Right ventricle myocardium inferior (tissue), 1 donor: ENCODE measurements at regions of chr3 and their contacts with region 1.

Region 1: DNA sequence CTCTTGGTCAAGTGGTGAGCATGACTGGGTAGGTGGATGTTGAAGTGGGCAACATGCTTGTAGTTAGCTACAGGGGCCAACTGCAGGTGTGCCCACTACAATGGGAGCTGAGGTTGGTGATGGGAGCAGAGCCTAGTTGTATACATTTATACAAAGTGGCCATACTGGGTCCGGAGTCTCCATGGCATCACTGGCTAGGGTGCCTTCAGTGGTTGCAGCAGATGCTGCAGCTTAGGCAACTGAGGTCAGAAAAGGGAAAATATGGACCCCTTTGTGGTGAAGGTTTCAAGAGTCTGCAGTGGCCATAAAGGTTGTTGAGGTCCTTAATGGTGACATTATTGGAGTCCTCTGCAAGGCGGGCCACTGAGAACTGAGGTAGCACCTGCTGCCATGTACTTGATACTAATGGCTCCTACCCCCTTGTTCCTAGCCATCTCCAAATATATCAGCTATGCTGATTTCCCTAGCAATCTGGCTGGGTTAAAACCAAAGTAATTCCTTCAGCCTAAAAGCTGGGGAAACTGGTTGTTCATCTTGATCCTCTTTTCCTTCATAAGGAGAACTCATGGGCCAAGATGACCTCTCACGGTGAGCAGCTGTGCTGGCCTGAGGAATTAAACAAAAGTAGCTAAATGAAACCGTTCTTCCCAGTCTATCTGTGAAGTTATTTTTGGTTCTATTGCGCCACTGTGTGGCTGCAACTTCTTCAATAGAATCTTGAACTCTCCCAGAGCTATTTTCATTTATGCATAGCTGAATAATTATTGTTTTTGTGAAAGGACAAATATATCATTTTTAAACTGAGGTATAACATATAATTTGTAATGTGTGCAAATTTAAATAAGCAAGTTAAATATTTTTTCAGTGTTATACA is 76.0 kb upstream of the PLSCR4 start:
- DNase-seq: no peak
- ATAC-seq: peak; percentile 81

Region 2: DNA sequence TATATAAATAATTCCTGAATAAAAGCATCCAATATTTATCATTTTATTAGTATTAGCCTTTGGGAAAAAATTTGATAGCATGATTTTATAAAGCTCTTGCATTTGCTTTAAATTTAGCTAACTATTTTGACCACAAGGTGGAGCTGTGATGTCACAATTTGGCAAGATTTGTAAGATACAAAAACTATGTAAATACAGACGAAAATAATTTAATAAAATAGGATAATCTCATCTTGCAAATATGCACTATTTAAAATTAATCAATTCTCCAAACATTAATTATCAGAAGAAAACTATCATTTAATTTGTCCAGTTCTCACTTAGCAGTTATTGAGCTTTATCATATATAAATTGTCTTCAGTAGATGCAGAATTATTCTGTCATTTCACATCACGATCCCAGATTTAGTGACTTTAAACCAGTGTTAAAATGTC is 261.3 kb before region 1 on chr3:
- intact Hi-C with region 1: loop called (anchors 5 kb)
- DNase-seq: no peak
- ATAC-seq: no peak

Region 3: GRCh38 chr3:146189519-146190173 is 137.3 kb before region 1 on chr3:
- intact Hi-C with region 1: loop called (anchors 1 kb)
- DNase-seq: no peak
- ATAC-seq: peak; percentile 59

Region 4: GRCh38 chr3:146200461-146201220 is 126.3 kb before region 1 on chr3:
- intact Hi-C with region 1: loop called (anchors 5 kb)
- DNase-seq: no peak
- ATAC-seq: no peak

Region 5: DNA sequence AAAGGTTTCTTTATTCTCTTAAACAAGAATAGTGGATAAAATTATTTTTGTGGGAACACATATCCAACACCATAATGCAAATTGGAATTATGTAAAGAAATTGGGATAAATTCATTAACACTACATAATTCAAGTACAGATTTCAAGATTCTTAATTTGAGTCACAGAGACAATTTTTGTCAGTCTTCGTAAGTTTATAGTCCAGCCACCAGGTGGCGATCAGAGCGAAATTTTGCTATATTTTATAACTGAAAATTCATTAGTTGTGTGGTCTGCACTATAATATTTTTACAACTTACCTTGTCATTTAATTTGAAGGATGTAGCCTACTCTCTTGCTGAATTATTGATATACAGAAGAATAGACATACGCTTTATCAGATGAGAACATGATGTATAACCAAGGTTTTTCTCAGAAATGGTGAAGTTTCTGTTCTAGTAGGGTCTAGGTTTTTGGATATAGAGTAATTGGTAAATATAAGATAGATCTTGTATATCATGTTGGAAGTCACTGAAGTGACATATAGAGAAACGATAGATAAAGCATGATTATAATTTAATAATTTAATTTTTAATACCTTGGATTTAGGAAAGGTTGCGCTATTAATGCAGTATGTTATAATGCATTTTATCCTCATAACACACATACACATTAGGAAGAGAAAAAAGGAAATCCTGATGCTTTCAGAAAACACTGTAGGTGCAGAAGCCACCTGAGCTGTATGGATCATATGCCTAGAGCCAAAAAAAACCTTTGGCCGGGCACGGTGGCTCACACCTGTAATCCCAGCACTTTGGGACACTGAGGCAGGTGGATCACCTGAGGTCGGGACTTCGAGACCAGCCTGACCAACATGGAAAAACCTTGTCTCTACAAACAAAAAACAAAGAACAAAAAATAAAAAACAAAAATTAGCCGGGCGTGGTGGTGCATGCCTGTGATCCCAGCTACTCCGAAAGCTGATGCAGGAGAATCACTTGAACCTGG is 107.7 kb before region 1 on chr3:
- intact Hi-C with region 1: loop called (anchors 2 kb)
- DNase-seq: no peak
- ATAC-seq: no peak